A673 (cell line): ENCODE measurements at regions of chr13 and their contacts with region 1.

Region 1: GRCh38 chr13:30216111-30216510 is 91.2 kb downstream of the KATNAL1 start:
- DNase-seq: peak; percentile 97
- H3K4me3 ChIP-seq: no peak overlapping the region
- H3K27ac ChIP-seq: peak overlapping the region; percentile 91
- H3K4me1 ChIP-seq: peaks cover 12% of the 10 kb centered on the region
- H3K27me3 ChIP-seq: no peaks in the 10 kb centered on the region
- CTCF ChIP-seq: no peak

Region 2: DNA sequence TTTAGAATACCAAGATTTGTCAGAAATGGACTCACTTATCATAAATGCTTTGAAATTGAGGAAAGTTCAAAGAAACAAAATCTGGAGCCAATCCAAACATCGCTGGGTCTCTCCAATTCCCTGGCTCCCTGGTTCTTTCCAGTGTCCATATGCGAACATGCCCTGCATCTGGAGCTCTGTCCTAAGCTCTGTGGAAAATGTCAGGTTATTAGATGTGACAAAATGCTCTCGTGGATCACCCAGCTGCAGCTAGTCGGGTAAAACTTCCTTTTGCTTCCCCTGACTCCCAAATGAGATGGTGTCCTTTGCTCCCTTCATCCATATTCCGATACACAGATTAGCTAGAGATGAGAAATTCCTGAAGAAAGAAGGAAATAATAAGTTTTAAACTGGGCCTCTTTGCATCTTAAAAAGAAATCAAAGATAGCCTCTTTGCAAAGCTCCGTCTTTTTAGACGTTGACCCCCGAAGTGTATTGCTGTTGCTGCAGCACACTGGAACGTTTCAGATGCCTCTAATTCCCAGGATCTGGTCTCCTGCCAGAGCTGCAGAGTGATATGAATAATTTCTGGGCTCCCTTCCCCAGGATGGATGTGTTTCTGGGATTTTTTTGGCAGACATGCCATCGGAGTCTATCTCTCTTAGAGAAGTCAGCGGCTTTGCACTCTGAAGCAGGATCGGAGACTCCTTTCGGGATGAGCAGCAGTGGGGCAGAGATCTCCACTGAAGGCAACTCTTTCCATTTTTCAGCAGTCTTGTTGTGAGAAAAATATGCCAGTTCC is 819.3 kb after region 1 on chr13:
- CTCF ChIA-PET with region 1: no interaction called
- POLR2A ChIA-PET with region 1: interaction called, 11 read pairs
- intact Hi-C with region 1: no loop called
- DNase-seq: no peak
- H3K4me3 ChIP-seq: no peak overlapping the region
- H3K27ac ChIP-seq: no peak overlapping the region
- H3K4me1 ChIP-seq: no peaks in the 10 kb centered on the region
- H3K27me3 ChIP-seq: no peaks in the 10 kb centered on the region
- CTCF ChIP-seq: no peak